ENCODE measurements at regions of chr9 and their contacts with region 1.

Region 1: DNA sequence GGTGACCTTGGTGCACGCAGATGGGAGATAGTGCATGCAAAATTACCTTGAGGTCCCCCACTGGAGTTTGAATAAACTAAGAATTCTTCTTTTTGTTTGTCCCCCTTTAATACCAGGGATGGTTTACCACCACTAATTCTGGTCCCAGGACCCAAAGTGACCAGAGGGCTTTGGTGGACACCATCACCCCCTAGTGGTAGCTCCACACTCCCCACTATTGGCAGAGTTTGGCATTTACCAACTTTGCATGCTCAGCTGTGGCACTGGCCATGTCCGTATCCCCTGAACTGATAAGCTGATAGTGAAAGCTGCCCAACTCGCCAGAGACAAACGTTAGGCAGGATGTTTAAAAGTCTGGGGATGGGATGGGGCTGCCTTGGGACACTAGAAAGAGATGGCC is 3.3 kb downstream of the ASTN2 start:
- ATAC-seq: peak in 4 of 8 experiments; percentile 7 to 52 (median 40)
- H3K4me3 ChIP-seq: no peak overlapping the region
- H3K27ac ChIP-seq: no peak overlapping the region
- H3K4me1 ChIP-seq: peaks cover 15 to 19% of the 10 kb centered on the region in 2 donors

Region 2: DNA sequence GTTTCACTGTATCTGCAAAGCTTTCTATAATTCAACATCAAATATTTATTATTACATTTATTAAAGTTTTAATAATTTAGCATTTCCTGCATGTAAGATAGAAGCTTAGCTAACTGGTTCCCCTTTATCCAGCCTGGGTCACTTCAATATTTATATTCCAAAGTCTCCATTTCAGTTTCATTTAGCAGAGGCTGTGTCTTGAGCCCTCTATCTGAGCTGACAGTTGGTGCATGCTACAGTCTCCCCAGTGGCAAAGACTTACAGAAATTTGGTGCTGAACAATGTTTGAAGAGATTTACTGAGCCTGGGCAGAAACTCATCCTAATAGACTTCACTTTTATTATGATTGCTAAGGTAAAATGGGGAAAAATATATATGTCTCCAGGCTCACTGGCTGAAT is 445.3 kb before region 1 on chr9:
- in situ Hi-C with region 1: no loop called
- ATAC-seq: no peak
- H3K4me3 ChIP-seq: no peak overlapping the region
- H3K27ac ChIP-seq: no peak overlapping the region
- H3K4me1 ChIP-seq: peaks cover under 1 to 16% of the 10 kb centered on the region in 2 donors

Region 3: GRCh38 chr9:117092582-117092981 is 319.0 kb before region 1 on chr9:
- in situ Hi-C with region 1: loop called in 1 of 9 experiments (anchors 25 kb)
- ATAC-seq: peak; percentile 47 to 99 (median 81)
- H3K4me3 ChIP-seq: no peak overlapping the region
- H3K27ac ChIP-seq: no peak overlapping the region
- H3K4me1 ChIP-seq: peaks cover 16 to 25% of the 10 kb centered on the region in 2 donors

Measured in motor neuron (in vitro differentiated cells).